Gastrocnemius medialis (tissue), 4 donors: ENCODE measurements at regions of chr4 and their contacts with region 1.

Region 1: GRCh38 chr4:37802068-37802666 is 24.3 kb upstream of the PGM2 start:
- DNase-seq: peak in 1 of 2 donors; percentile 57
- ATAC-seq: peak; percentile 73 to 92
- H3K4me3 ChIP-seq: no peak overlapping the region
- H3K27ac ChIP-seq: no peak overlapping the region
- H3K4me1 ChIP-seq: peaks cover 12 to 15% of the 10 kb centered on the region in 2 donors
- H3K27me3 ChIP-seq: no peaks in the 10 kb centered on the region
- CTCF ChIP-seq: peak in 4 of 5 experiments; percentile 51 to 73 (median 56)
- POLR2A ChIP-seq: no peak

Region 2: GRCh38 chr4:37936889-37937498 is 134.8 kb after region 1 on chr4:
- in situ Hi-C with region 1: no loop called
- intact Hi-C with region 1: no loop called
- DNase-seq: peak; percentile 91 to 96
- ATAC-seq: peak; percentile 78 to 79
- H3K4me3 ChIP-seq: peak overlapping the region; percentile 18 to 28 (median 24)
- H3K27ac ChIP-seq: peak overlapping the region; percentile 83 to 97 (median 88)
- H3K4me1 ChIP-seq: peaks cover 50 to 58% of the 10 kb centered on the region in 2 donors
- H3K27me3 ChIP-seq: no peaks in the 10 kb centered on the region
- CTCF ChIP-seq: no peak
- POLR2A ChIP-seq: peak; percentile 53 to 76

Region 3: GRCh38 chr4:38034986-38035882 is 233.1 kb after region 1 on chr4:
- in situ Hi-C with region 1: loop called (anchors 5 to 10 kb)
- intact Hi-C with region 1: loop called (anchors 1 kb)
- DNase-seq: no peak
- ATAC-seq: peak; percentile 33 to 74
- H3K4me3 ChIP-seq: no peak overlapping the region
- H3K27ac ChIP-seq: no peak overlapping the region
- H3K4me1 ChIP-seq: peaks cover 0 to 4% of the 10 kb centered on the region in 2 donors
- H3K27me3 ChIP-seq: no peaks in the 10 kb centered on the region
- CTCF ChIP-seq: peak; percentile 38 to 69 (median 64)
- POLR2A ChIP-seq: no peak